Posterior vena cava (tissue), 2 donors: ENCODE measurements at regions of chr17 and their contacts with region 1.

Region 1: GRCh38 chr17:72539981-72540897 is 419.4 kb downstream of the SOX9 start:
- DNase-seq: peak; percentile 91

Region 2: GRCh38 chr17:70636517-70637133 is 1903.6 kb before region 1 on chr17:
- intact Hi-C with region 1: loop called in 1 of 2 experiments (anchors 10 kb)
- DNase-seq: no peak

Region 3: DNA sequence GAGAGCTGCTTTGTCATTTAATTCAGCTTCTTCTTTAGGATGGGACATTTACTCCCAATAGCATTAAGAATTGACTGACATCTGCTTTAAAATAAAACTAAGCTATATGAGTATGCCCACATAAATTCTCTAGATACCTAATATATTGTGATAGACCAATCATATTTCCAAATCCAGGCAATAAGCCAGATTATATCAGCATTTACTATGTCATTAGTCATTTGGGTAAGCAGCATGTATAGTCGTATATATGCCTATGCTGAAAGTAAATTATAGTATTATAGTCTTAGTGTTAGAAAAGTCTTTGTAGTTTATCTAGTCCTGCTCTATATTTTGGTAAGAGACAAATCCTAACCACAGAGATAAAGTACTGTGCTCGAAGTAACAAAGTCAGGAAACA is 1412.8 kb before region 1 on chr17:
- intact Hi-C with region 1: loop called in 1 of 2 experiments (anchors 10 kb)
- DNase-seq: no peak